ENCODE measurements at regions of chr5 and their contacts with region 1.

Region 1: GRCh38 chr5:74772359-74772758 is 5.3 kb downstream of the NSA2 start:
- DNase-seq: no peak
- ATAC-seq: no peak
- H3K4me3 ChIP-seq: no peak overlapping the region
- H3K27ac ChIP-seq: no peak overlapping the region
- H3K4me1 ChIP-seq: peaks cover 0 to 11% (median 9%) of the 10 kb centered on the region in 12 donors
- H3K27me3 ChIP-seq: no peaks in the 10 kb centered on the region
- CTCF ChIP-seq: no peak
- POLR2A ChIP-seq: no peak

Region 2: DNA sequence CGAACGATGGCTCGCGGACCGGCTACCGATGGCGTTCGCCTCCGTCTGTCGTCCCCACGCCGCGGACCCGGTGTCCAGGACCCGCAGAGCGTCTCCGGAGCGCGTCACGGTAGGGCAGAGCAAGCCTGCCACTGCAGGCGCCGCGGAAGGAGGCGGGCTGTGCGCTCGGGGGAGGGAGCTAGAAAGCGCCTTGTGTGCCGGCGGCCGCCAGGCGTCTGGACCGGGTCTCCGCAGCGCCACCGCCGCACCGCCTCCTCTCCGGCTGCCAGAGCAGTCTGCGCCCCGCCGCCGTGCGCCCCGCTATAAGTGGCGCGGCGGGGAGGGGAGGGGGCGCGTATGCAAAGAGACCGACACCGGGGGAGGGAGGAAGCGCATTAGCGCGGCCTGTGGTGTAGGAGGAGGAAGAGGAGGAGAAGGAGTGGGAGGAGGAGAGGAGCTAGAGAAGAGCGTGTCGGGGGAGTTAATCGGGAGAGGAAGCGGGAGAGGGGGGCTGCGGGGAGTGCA is 131.9 kb before region 1 on chr5 and contains the start of gene ENC1:
- intact Hi-C with region 1: no loop called
- DNase-seq: peak; percentile 89 to 96 (median 90)
- ATAC-seq: peak; percentile 76 to 94 (median 86)
- H3K4me3 ChIP-seq: peak within 1 kb of the TSS; percentile 69 to 91 (median 80)
- H3K27ac ChIP-seq: peak within 1 kb of the TSS; percentile 81 to 96 (median 92)
- H3K4me1 ChIP-seq: peaks cover 0 to 62% (median 31%) of the 10 kb centered on the region in 12 donors
- H3K27me3 ChIP-seq: no peaks in the 10 kb centered on the region
- CTCF ChIP-seq: peak; percentile 39 to 66 (median 54)
- POLR2A ChIP-seq: peak in 1 of 2 donors; percentile 71
- total RNA-seq, gene ENC1: 3.1 to 11.0 (median 5.5) TPM

Region 3: DNA sequence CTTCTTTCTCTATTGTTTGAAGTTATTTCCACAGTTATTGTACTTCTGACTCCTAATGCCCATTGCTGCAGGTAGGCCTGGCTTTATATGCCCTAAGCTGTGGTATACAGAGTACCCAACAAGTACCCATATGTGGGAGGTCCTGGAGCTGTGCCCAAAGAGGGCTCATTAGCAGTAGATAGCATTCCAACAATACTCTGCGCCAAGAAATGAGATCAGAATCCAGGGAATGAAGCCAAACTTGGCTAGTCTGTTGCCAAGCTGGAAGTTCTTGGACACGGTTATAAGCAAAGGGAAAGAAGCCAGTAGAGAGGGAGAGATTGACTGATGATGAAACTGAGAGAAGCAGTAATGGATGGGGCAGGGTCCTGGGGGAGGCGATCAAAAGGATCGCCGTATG is 123.5 kb after region 1 on chr5:
- intact Hi-C with region 1: loop called in 2 of 10 experiments (anchors 5 kb)
- DNase-seq: peak; percentile 70 to 90 (median 80)
- ATAC-seq: peak; percentile 98 to 99 (median 98)
- H3K4me3 ChIP-seq: no peak overlapping the region
- H3K27ac ChIP-seq: no peak overlapping the region
- H3K4me1 ChIP-seq: peaks cover 0 to 9% (median 0%) of the 10 kb centered on the region in 12 donors
- H3K27me3 ChIP-seq: no peaks in the 10 kb centered on the region
- CTCF ChIP-seq: no peak
- POLR2A ChIP-seq: no peak

Region 4: DNA sequence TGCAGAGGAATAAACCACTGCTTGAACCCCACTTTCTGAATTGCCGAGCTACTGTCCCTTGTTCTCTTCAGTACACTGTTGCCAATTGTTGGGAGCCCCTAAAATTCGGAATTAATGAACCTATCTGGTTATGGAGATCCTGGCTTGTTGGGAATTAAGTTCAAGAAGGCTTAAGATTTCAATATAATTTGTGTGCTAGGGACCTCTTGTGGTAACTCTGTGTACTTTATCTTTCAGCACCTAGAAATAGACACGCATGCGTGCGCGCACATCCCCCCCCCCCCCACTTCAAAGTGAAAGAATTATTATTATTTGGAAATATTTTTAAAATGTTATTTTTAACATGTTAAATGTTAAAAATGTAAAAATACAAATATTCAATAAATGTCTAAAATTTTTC is 147.1 kb after region 1 on chr5:
- intact Hi-C with region 1: loop called in 8 of 10 experiments (anchors 2 to 10 kb)
- DNase-seq: no peak
- ATAC-seq: peak in 1 of 4 donors; percentile 55
- H3K4me3 ChIP-seq: no peak overlapping the region
- H3K27ac ChIP-seq: no peak overlapping the region
- H3K4me1 ChIP-seq: no peaks in the 10 kb centered on the region
- H3K27me3 ChIP-seq: peaks cover 0 to 3% (median 0%) of the 10 kb centered on the region in 9 donors
- CTCF ChIP-seq: peak; percentile 23 to 60 (median 48)
- POLR2A ChIP-seq: no peak

Measured in heart left ventricle (tissue), 16 donors.